ENCODE measurements at regions of chr9 and their contacts with region 1.

Region 1: DNA sequence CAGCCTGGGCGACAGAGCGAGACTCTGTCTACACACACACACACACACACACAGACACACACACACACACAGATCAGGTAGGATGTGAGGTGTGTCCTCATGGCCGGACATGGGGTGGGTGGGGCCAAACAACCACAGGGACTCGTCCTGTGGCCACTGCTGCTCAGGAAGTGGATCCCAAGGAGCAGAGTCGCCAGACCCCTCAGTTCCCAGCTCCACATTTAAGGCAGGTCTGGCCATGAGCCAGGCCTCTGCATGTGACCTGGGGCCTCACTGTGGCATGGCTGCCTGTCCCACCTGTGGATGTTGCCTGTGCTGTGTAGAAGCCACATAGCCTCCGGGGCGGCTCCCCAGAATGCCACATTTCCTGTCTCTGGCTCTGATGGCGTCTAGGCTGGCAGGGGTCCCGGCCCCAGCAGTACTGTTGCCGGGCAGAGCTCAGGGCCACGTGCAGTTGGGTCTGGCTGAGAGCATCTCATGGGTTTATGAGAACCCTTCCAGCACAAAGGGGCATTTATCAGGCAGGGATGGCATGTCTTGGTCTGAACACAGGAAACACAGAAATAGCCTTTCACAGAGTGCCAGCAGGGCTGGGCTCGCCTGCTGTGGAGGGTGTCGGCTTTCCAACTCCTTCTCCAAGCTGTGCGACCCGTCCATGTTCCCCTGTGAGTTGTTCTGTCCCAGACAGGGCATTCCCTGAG is 9.9 kb upstream of the NINJ1 start:
- DNase-seq: peak; percentile 34 to 84 (median 73)
- H3K4me3 ChIP-seq: peak overlapping the region; percentile 42
- H3K4me3 Mint-ChIP-seq: peak overlapping the region; percentile 5 to 81 (median 57)
- H3K27ac ChIP-seq: peak overlapping the region; percentile 39
- H3K27ac Mint-ChIP-seq: peak overlapping the region; percentile 92 to 100 (median 96)
- H3K4me1 ChIP-seq: peaks cover 54% of the 10 kb centered on the region
- H3K4me1 Mint-ChIP-seq: peaks cover 28 to 54% (median 34%) of the 10 kb centered on the region in 3 donors
- H3K27me3 ChIP-seq: no peaks in the 10 kb centered on the region
- H3K27me3 Mint-ChIP-seq: no peaks in the 10 kb centered on the region

Region 2: GRCh38 chr9:93205045-93205768 is 61.2 kb after region 1 on chr9:
- CTCF ChIA-PET with region 1: no interaction called
- POLR2A ChIA-PET with region 1: interaction called, 11 read pairs
- DNase-seq: peak in 1 of 5 donors; percentile 25
- H3K4me3 ChIP-seq: no peak overlapping the region
- H3K4me3 Mint-ChIP-seq: no peak overlapping the region
- H3K27ac ChIP-seq: no peak overlapping the region
- H3K27ac Mint-ChIP-seq: peak overlapping the region in 4 of 8 donors; percentile 33 to 70 (median 52)
- H3K4me1 ChIP-seq: peaks cover 6% of the 10 kb centered on the region
- H3K4me1 Mint-ChIP-seq: peaks cover 10 to 12% (median 12%) of the 10 kb centered on the region in 3 donors
- H3K27me3 ChIP-seq: no peaks in the 10 kb centered on the region
- H3K27me3 Mint-ChIP-seq: peaks cover 0 to 2% of the 10 kb centered on the region in 2 donors